HepG2 (cell line): ENCODE measurements at regions of chr20 and their contacts with region 1.

Region 1: DNA sequence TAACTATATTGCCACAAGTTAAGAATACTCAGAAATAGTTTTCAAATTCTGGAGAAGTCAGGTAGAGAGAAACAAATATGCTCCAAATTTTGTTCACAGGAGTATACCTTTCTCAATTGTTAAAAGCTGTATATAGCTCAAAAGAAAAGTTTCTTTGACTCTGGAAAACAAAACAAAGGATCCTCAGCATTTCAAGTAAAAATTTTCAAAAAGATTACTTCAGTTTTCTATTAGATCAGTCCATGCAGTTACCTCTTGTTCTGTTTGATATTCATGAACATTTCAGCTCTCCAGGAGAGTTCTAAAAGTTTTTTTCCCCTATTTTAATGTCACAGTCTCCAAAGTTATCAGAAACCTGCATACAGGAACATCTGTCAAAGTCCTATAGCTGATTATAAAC is 30.4 kb upstream of the ENTPD6 start:
- DNase-seq: no peak
- ATAC-seq: no peak
- H3K4me3 ChIP-seq: no peak overlapping the region
- H3K27ac ChIP-seq: no peak overlapping the region
- H3K4me1 ChIP-seq: peaks cover 23% of the 10 kb centered on the region
- H3K27me3 ChIP-seq: no peaks in the 10 kb centered on the region; a peak in 1 of 5 replicates
- CTCF ChIP-seq: no peak
- EP300 ChIP-seq: no peak
- POLR2A ChIP-seq: no peak
- RAD21 ChIP-seq: no peak

Region 2: DNA sequence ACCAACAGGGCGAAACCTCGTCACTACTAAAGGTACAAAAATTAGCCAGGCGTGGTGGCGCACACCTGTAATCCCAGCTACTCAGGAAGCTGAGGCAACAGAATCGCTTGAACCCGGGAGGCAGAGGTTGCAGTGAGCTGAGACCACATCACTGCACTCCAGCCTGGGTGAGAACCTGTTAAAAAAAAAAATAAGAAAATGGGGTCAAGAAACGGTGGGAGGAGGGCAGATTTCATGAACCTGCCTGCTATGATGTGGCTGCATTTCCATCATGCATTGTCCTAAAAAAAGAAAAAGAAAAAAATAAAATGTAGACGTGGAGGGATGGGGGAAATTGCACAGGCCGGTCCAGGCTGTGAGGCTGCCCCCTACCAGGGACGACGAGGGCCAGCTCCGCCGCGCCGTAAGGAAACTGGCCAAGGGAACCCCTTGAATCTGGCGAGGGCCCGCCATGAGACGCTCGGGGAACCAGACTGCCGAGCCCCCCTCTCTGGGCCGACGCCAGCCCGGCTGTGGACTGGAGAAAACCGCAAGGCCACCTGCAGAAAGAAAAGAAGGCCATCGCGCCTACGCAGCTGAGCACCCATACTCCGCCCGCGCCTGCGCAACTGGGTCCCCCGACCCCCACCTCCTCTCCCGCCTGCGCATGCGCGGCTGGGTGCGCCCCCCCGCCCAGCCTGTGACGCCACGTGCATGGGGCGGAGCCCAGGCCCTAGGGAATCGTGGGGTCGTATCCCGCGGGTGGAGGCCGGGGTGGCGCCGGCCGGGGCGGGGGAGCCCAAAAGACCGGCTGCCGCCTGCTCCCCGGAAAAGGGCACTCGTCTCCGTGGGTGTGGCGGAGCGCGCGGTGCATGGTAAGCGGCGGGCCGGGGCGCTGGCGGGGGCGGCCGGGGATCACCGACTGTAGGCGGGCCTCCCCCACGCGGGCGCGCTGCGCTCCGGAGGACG is 30.2 kb after region 1 on chr20 and contains the start of gene ENTPD6:
- CTCF ChIA-PET with region 1: no interaction called
- POLR2A ChIA-PET with region 1: interaction called, 13 read pairs
- in situ Hi-C with region 1: no loop called
- intact Hi-C with region 1: no loop called
- DNase-seq: peak; percentile 90
- ATAC-seq: peak; percentile 81
- H3K4me3 ChIP-seq: peak within 1 kb of the TSS; percentile 82 to 97 (median 93)
- H3K27ac ChIP-seq: peak within 1 kb of the TSS; percentile 67
- H3K4me1 ChIP-seq: peaks cover 48% of the 10 kb centered on the region
- H3K27me3 ChIP-seq: peaks cover 2 to 8% of the 10 kb centered on the region in 2 experiments; a peak in 1 of 5 replicates
- CTCF ChIP-seq: peak; percentile 71
- EP300 ChIP-seq: no peak
- POLR2A ChIP-seq: peak; percentile 89 to 97
- RAD21 ChIP-seq: peak; percentile 47
- total RNA-seq, gene ENTPD6: 98.4 and 164 TPM in 2 replicates